ENCODE measurements at regions of chr12 and their contacts with region 1.

Region 1: DNA sequence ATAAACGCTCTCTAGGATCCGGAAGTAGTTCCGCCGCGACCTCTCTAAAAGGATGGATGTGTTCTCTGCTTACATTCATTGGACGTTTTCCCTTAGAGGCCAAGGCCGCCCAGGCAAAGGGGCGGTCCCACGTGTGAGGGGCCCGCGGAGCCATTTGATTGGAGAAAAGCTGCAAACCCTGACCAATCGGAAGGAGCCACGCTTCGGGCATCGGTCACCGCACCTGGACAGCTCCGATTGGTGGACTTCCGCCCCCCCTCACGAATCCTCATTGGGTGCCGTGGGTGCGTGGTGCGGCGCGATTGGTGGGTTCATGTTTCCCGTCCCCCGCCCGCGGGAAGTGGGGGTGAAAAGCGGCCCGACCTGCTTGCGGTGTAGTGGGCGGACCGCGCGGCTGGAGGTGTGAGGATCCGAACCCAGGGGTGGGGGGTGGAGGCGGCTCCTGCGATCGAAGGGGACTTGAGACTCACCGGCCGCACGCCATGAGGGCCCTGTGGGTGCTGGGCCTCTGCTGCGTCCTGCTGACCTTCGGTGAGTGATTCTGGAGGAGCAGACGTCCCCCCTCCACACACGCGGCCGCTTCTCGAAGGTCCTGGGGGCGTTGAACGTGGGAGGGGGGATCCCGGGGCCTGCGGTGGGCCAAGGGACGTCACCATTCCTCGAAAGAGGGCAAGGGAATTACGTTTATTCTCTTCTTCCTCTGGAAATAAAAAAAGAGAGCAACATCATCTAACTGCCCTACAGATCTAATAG is at the start of gene HSP90B1:
- DNase-seq: peak; percentile 99
- ATAC-seq: peak; percentile 72
- H3K4me3 ChIP-seq: peak within 1 kb of the TSS; percentile 93
- H3K27ac ChIP-seq: peak within 1 kb of the TSS; percentile 99
- H3K4me1 ChIP-seq: peaks cover 21% of the 10 kb centered on the region
- H3K27me3 ChIP-seq: no peaks in the 10 kb centered on the region
- CTCF ChIP-seq: no peak
- EP300 ChIP-seq: peak; percentile 40 to 67; a peak in 3 of 4 replicates
- POLR2A ChIP-seq: peak; percentile 98
- RAD21 ChIP-seq: no peak
- polyA plus RNA-seq, gene HSP90B1: 254 to 414 TPM

Region 2: DNA sequence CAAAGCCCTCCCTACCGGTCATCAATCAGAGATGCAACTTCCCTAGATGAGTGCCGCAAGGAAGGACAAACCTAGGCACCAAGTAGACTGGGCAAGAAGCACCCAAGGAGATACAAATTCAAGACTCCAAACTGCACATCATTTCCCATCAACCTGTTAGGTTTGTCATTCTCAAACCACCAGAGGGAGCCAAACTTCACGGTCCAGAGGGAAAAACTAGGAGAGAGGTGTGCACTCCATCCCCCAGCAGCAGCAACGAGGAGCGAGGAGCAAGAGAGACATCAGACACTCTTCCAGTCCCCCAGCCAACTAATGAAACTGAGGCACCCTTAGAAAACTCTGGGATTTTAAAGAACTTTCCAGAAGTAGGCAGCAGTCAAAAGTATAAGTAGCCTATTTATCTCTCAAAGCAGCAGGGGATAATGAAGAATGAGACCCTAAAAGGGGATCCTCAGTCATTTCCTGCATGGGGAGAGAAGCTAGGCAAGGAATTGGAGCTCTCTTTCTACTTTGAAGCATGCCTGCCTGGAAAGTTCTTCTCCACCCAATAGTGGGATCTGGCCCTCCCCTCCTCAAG is 52.2 kb before region 1 on chr12:
- CTCF ChIA-PET with region 1: interaction called, 21 read pairs
- POLR2A ChIA-PET with region 1: interaction called, 73 read pairs
- RAD21 ChIA-PET with region 1: interaction called, 121 read pairs
- SMC1A ChIA-PET with region 1: interaction called, 125 read pairs
- in situ Hi-C with region 1: no loop called
- intact Hi-C with region 1: loop called (anchors 2 kb)
- DNase-seq: peak; percentile 49
- ATAC-seq: peak; percentile 66
- H3K4me3 ChIP-seq: no peak overlapping the region
- H3K27ac ChIP-seq: no peak overlapping the region
- H3K4me1 ChIP-seq: peaks cover 31% of the 10 kb centered on the region
- H3K27me3 ChIP-seq: no peaks in the 10 kb centered on the region
- CTCF ChIP-seq: peak; percentile 74 to 79 (median 77)
- EP300 ChIP-seq: no peak
- POLR2A ChIP-seq: no peak
- RAD21 ChIP-seq: peak; percentile 92

Region 3: DNA sequence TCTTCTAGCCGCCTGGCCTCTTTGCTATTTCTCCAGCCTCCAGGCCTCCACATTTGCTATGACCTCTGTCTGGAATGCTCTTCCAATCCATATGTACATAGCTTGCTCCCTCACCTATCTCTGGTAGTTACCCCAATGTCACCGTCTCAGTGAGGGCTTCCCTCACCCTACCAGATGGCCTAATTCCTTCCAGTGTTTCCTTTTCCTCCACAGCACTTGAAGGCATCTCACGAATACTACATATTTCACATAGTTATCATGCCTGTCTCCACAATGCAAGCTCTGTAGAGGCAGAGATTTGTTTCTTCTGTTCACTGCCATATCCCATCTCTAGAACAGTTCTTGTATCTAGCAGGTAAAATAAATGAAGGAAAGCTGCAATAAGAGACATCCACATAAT is 21.3 kb before region 1 on chr12:
- CTCF ChIA-PET with region 1: interaction called, 3 read pairs
- POLR2A ChIA-PET with region 1: interaction called, 7 read pairs
- RAD21 ChIA-PET with region 1: interaction called, 20 read pairs
- SMC1A ChIA-PET with region 1: interaction called, 8 read pairs
- in situ Hi-C with region 1: no loop called
- intact Hi-C with region 1: no loop called
- DNase-seq: no peak
- ATAC-seq: no peak
- H3K4me3 ChIP-seq: no peak overlapping the region
- H3K27ac ChIP-seq: no peak overlapping the region
- H3K4me1 ChIP-seq: peaks cover 16% of the 10 kb centered on the region
- H3K27me3 ChIP-seq: no peaks in the 10 kb centered on the region
- CTCF ChIP-seq: no peak
- EP300 ChIP-seq: no peak
- POLR2A ChIP-seq: no peak
- RAD21 ChIP-seq: no peak

Region 4: GRCh38 chr12:103956516-103957027 is 26.4 kb after region 1 on chr12:
- CTCF ChIA-PET with region 1: interaction called, 17 read pairs
- POLR2A ChIA-PET with region 1: interaction called, 8 read pairs
- RAD21 ChIA-PET with region 1: interaction called, 15 read pairs
- SMC1A ChIA-PET with region 1: interaction called, 38 read pairs
- in situ Hi-C with region 1: no loop called
- intact Hi-C with region 1: loop called (anchors 2 kb)
- DNase-seq: no peak
- ATAC-seq: peak; percentile 31
- H3K4me3 ChIP-seq: peak overlapping the region; percentile 80
- H3K27ac ChIP-seq: peak overlapping the region; percentile 77
- H3K4me1 ChIP-seq: peaks cover 8% of the 10 kb centered on the region
- H3K27me3 ChIP-seq: no peaks in the 10 kb centered on the region
- CTCF ChIP-seq: no peak
- EP300 ChIP-seq: no peak
- POLR2A ChIP-seq: no peak
- RAD21 ChIP-seq: no peak

Region 5: DNA sequence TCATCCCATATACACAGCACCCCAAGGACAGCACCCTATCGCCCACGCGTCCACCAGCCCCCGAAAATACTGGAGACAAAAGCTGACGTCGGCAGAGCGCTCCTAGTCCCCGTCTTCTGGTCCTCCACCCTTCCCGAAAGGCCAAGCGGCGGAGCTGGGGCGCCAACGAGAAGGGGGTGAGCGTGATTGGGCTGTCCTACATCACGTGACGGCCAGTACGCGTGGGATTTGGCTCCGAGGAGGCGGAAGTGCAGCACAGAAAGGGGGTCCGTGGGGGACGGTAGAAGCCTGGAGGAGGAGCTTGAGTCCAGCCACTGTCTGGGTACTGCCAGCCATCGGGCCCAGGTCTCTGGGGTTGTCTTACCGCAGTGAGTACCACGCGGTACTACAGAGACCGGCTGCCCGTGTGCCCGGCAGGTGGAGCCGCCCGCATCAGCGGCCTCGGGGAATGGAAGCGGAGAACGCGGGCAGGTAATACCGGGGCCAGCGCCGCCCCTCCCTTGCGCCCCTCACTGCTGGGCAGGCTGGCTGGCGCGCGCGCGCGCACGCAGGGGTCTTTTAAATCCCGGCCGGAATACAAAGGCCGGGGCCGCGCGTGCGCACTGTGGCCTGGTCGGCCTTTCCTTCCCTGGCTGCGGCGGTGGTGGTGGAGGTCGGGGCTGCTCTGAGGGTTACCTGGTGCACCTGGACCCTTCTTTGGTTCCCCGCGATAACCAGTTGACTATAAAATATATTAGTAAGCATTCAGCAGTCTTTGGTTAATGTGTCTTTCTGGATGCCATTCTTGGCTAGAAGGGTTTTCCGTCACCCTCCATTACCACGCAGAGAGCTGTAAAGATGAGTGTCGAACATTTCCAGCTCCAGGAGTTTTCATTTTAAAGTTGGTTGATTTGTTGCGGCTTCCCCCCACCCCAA is 35.6 kb after region 1 on chr12 and contains the start of gene TDG:
- CTCF ChIA-PET with region 1: interaction called, 33 read pairs
- POLR2A ChIA-PET with region 1: interaction called, 52 read pairs
- RAD21 ChIA-PET with region 1: interaction called, 14 read pairs
- SMC1A ChIA-PET with region 1: interaction called, 25 read pairs
- in situ Hi-C with region 1: no loop called
- intact Hi-C with region 1: loop called (anchors 2 kb)
- DNase-seq: peak; percentile 97
- ATAC-seq: peak; percentile 96
- H3K4me3 ChIP-seq: peak within 1 kb of the TSS; percentile 92
- H3K27ac ChIP-seq: peak within 1 kb of the TSS; percentile 94
- H3K4me1 ChIP-seq: peaks cover 10% of the 10 kb centered on the region
- H3K27me3 ChIP-seq: no peaks in the 10 kb centered on the region
- CTCF ChIP-seq: peak in 1 of 3 experiments; percentile 23; a peak in 1 of 6 replicates
- EP300 ChIP-seq: no peak
- POLR2A ChIP-seq: peak; percentile 96
- RAD21 ChIP-seq: no peak
- polyA plus RNA-seq, gene TDG: 29.7 to 33.7 TPM